ENCODE measurements at regions of chr5 and their contacts with region 1.

Region 1: GRCh38 chr5:172984243-172984953 is 827 bp downstream of the ATP6V0E1 start:
- DNase-seq: peak; percentile 73 to 81
- H3K4me3 ChIP-seq: peak overlapping the region; percentile 85 to 99
- H3K27ac ChIP-seq: peak overlapping the region; percentile 93 to 96
- H3K4me1 ChIP-seq: no peaks in the 10 kb centered on the region
- H3K27me3 ChIP-seq: no peaks in the 10 kb centered on the region
- CTCF ChIP-seq: peak in 3 of 4 experiments; percentile 10 to 53 (median 21)
- POLR2A ChIP-seq: no peak

Region 2: DNA sequence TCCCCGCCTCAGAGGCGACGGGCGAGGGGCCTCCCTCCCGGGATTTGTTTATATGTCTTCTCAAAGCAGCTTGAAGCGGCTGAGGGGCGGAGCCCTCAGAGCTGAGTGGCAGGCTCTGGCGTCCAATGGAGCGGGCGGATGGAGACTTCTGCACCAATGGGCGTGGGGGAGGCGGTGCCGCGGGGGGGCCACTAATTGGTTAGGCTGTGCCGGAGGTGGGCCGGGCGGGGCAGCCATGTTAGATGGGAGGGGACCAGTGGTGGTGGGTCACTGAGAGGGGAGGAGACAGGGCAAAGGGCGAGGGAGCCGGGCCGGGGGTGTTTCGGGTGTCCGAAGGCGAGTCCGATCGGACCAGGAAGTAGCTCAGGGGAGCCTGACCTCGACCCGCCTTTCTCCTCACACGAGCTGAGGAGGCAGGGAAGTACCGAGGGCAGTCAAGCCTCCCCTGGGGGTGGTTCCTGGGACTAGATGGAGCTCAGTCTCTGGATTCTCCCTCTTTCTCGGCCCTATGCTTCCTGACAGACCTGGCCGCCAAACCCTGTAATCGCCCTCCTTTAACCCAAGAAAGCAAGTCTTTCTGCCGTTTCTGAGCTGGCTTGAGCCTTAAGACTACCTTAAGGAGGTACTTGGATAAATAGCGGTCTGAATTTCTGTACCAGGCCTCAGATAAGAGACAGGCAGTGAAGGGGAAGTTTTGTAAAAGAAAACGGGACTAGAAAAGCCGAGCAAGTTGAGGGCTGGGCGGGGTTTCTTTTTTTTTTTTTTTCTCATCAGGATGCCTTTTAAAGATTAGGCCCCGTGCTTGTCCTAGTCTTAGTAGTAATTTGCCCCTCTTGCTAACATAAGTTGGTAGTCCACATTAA is 72.9 kb after region 1 on chr5:
- intact Hi-C with region 1: loop called (anchors 10 kb)
- DNase-seq: peak; percentile 98
- H3K4me3 ChIP-seq: peak overlapping the region; percentile 91 to 93
- H3K27ac ChIP-seq: peak overlapping the region; percentile 94 to 99
- H3K4me1 ChIP-seq: no peaks in the 10 kb centered on the region
- H3K27me3 ChIP-seq: no peaks in the 10 kb centered on the region
- CTCF ChIP-seq: peak in 1 of 4 experiments; percentile 39
- POLR2A ChIP-seq: peak in 1 of 2 donors; percentile 40